CD8-positive, alpha-beta T cell (primary cell): ENCODE measurements at regions of chr1 and their contacts with region 1.

Region 1: DNA sequence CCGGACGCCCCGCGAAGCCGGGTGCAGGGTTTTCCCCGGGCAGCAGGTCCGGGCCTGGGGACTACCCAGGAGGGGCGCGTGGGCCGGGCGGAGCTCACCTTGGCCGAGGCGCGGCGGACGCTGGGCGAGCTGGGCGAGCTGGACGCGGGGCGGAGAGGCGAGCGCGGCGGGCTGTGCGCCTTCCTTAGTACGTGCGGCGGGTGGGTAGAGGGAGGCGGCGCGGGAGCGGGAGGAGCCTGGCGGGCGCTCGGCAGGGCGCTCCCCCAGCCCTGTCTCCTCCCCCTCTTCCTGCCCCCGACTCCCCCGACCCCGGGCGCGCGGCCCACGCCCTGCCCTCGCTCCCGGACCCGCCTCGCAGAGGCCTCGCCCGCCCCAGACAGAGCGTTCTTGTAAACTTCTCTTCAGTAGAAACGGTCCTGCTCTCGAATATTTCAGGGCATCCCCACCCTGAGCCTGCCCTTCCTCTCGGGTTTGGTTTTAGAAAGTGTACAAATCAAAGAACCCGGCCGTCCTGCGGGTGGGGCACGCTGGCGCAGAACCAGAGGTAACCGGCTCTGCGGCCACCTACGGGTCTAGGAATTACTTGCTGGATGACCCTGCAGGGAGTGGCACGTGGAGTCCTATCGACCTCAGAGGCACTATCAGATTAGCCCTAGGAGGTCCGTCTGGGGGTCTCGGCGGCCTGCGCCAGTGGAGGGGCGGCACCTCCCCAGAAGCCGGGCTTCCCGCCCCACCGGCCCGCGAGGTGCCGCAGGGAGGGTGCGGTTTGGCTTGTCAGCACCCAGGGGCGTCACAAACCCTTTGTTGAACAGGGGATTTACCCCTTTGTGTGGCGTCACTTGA is at the start of gene S100A10:
- DNase-seq: peak; percentile 58 to 92 (median 82)
- ATAC-seq: peak; percentile 86
- H3K4me3 ChIP-seq: peak within 1 kb of the TSS; percentile 78 to 94
- H3K4me3 Mint-ChIP-seq: peak within 1 kb of the TSS; percentile 98
- H3K27ac ChIP-seq: peak within 1 kb of the TSS; percentile 82 to 91
- H3K27ac Mint-ChIP-seq: peak within 1 kb of the TSS; percentile 97
- H3K4me1 ChIP-seq: peaks cover 48% of the 10 kb centered on the region
- H3K4me1 Mint-ChIP-seq: peaks cover 50% of the 10 kb centered on the region
- H3K27me3 ChIP-seq: no peaks in the 10 kb centered on the region
- H3K27me3 Mint-ChIP-seq: no peaks in the 10 kb centered on the region
- CTCF ChIP-seq: no peak
- total RNA-seq, gene S100A10: 132 to 138 TPM

Region 2: DNA sequence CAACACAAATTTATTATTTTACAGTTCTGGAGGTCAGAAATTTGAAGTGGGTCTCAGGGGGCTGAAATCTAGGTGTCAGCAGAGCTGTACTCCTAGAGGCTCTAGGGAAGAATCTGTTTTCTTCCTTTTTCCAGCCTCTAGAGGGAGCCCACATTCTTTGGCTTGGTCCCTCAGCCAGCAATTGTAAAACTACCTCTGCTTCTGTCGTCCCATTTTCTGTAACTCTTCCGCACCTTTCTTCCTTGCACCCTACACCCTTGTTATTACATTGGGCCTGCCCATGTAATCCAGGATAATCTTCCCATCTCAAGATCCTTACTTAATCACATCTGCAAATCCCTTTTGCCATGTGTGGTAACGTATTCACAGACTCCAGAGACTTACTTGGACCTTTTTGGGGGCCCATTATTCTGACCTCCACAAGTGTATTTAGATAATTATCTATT is 59.8 kb before region 1 on chr1:
- CTCF ChIA-PET with region 1: interaction called, 149 read pairs
- POLR2A ChIA-PET with region 1: no interaction called
- intact Hi-C with region 1: loop called (anchors 1 kb)
- DNase-seq: peak; percentile 10 to 81 (median 38)
- ATAC-seq: peak; percentile 78
- H3K4me3 ChIP-seq: no peak overlapping the region
- H3K4me3 Mint-ChIP-seq: no peak overlapping the region
- H3K27ac ChIP-seq: no peak overlapping the region
- H3K27ac Mint-ChIP-seq: no peak overlapping the region
- H3K4me1 ChIP-seq: peaks cover 3% of the 10 kb centered on the region
- H3K4me1 Mint-ChIP-seq: peaks cover 2% of the 10 kb centered on the region
- H3K27me3 ChIP-seq: no peaks in the 10 kb centered on the region
- H3K27me3 Mint-ChIP-seq: no peaks in the 10 kb centered on the region
- CTCF ChIP-seq: peak; percentile 83

Region 3: GRCh38 chr1:153485863-153486262 is 1492.0 kb after region 1 on chr1:
- CTCF ChIA-PET with region 1: no interaction called
- POLR2A ChIA-PET with region 1: no interaction called
- intact Hi-C with region 1: no loop called
- DNase-seq: no peak
- ATAC-seq: no peak
- H3K4me3 ChIP-seq: no peak overlapping the region
- H3K4me3 Mint-ChIP-seq: no peak overlapping the region
- H3K27ac ChIP-seq: no peak overlapping the region
- H3K27ac Mint-ChIP-seq: no peak overlapping the region
- H3K4me1 ChIP-seq: no peaks in the 10 kb centered on the region
- H3K4me1 Mint-ChIP-seq: no peaks in the 10 kb centered on the region
- H3K27me3 ChIP-seq: peaks cover 0 to 3% of the 10 kb centered on the region in 2 experiments
- H3K27me3 Mint-ChIP-seq: peaks cover 45% of the 10 kb centered on the region
- CTCF ChIP-seq: no peak